BJ (cell line): ENCODE measurements at regions of chr19 and their contacts with region 1.

Region 1: GRCh38 chr19:1275260-1275975 is at the start of gene FAM174C:
- DNase-seq: peak; percentile 57
- H3K4me3 ChIP-seq: peak within 1 kb of the TSS; percentile 75
- H3K27me3 ChIP-seq: no peaks in the 10 kb centered on the region
- CTCF ChIP-seq: no peak
- polyA plus RNA-seq, gene FAM174C: 24.6 and 37.5 TPM in 2 replicates

Region 2: GRCh38 chr19:925526-926322 is 349.7 kb before region 1 on chr19 and contains the start of gene ARID3A:
- CTCF ChIA-PET with region 1: no interaction called
- POLR2A ChIA-PET with region 1: interaction called, 10 read pairs
- DNase-seq: peak; percentile 32
- H3K4me3 ChIP-seq: peak within 1 kb of the TSS; percentile 91
- H3K27me3 ChIP-seq: no peaks in the 10 kb centered on the region
- CTCF ChIP-seq: no peak
- polyA plus RNA-seq, gene ARID3A: 10.7 and 17.4 TPM in 2 replicates

Region 3: DNA sequence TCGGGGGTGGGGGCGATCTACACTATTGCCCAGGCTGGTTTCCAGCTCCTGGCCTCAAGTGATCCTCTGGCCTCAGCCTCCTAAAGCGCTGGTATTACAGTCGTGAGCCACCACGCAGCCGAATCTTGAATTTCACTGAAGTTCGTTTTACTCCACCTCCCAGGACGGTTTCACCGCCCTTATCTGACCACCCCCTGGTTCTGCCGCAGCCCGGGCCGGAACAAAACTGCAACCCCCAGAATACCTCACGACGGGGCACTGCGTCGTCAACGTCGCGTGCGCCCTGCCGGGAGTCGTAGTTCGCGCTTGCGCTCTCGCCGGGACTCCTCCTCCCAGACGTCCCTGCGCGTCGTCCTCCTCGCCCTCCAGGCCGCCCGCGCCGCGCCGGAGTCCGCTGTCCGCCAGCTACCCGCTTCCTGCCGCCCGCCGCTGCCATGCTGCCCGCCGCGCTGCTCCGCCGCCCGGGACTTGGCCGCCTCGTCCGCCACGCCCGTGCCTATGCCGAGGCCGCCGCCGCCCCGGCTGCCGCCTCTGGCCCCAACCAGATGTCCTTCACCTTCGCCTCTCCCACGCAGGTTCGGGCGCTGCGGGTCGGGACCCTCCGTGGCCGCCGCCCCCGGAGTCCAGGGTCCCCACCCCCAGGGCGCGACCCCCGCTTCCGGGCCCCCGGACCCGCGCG is 33.9 kb before region 1 on chr19 and contains the start of gene ATP5F1D:
- CTCF ChIA-PET with region 1: interaction called, 46 read pairs
- POLR2A ChIA-PET with region 1: interaction called, 5 read pairs
- DNase-seq: no peak
- H3K4me3 ChIP-seq: peak within 1 kb of the TSS; percentile 75
- H3K27me3 ChIP-seq: no peaks in the 10 kb centered on the region
- CTCF ChIP-seq: no peak
- polyA plus RNA-seq, gene ATP5F1D: 57.9 and 65.1 TPM in 2 replicates

Region 4: GRCh38 chr19:1373534-1374249 is 98.3 kb after region 1 on chr19:
- CTCF ChIA-PET with region 1: interaction called, 11 read pairs
- POLR2A ChIA-PET with region 1: no interaction called
- DNase-seq: no peak
- H3K4me3 ChIP-seq: no peak overlapping the region
- H3K27me3 ChIP-seq: no peaks in the 10 kb centered on the region
- CTCF ChIP-seq: no peak